ENCODE measurements at regions of chr12 and their contacts with region 1.

Region 1: DNA sequence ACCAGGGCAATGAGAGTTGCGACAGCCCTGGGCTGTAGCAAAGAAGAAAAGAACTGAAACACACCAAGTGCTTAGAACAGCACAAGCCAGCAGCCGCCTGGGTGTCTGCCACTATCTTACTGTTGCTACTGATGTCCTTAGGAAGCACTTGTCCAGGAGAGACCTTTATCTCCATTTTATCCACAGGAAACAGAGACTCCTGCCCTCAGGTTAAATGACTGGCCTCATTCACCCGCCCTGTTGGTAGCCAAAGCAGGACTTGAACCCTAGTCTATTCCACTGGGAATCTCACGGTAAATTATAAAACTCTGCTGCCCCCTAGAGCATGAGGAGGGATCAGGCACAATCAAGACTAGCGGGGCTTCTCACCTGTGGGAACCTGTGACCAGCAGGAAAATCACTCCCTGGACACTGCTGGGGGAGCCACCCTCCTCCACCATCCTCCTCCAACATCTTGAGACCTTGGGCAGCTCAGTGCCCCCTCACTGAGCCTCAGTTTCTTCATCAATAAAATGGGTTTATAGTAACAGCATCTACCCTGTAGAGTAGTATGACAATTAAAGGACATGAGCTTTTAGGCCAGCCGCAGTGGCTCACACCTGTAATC is 20.5 kb upstream of the TESC start:
- DNase-seq: peak; percentile 66

Region 2: DNA sequence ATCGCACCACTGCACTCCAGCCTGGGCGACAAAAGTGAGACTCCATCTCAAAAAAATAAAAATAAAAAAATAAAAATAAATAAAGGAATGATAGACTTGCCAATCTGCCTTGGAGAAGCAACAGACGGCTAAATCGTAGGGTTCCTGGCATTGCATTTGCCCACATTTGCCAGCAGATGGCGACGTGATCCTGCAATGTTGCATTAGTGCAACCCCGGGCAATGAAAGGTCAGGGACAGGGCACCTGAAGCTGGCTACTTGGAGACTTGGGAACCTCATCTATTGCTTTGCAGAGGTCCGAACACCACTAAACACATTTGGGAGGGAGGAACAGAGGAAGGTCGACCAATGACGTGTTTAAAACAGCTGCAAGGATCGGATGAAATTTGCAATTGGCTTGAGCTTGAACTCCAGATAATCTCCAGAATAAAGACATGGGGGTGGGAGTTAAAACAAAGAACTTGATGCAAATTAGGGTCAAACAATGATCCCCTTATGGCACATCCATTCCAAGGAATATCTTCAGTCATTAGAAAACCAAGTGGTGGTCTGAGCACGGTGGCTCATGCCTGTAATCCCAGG is 416.4 kb before region 1 on chr12:
- in situ Hi-C with region 1: loop called (anchors 25 kb)
- DNase-seq: peak; percentile 66

Region 3: DNA sequence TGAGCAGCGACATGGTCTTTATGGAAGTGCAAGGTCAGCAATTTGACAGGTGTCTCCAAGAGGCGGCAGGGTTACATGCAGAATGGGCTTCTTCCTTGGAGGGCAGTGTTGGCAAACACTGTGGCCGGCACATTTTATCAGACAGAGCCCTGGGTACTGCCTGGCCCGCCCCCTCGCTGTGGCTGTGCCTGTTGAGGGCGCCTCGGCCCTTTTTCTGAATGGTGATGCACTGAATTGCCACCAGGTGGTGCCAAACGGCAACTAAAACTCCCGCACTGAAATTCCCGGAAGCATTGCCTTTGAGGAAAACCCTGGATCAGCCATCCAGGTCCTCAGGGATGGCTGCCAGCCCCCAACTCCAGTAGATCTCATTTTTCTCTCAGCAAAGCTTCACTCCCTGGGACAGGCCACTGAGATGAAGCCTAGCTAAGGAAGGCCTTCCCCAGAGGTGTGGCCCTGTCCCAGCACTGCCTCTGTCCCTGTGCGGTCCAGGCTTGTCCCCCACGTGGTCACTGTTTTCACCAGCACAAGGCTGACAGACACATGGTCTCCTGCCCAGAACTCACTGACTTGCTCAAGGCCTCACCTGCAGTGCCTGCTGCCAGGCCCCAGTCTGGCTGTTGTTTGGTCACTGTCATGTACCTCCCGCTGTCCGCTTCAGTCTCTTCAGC is 94.1 kb before region 1 on chr12:
- in situ Hi-C with region 1: loop called (anchors 10 kb)
- DNase-seq: peak; percentile 81

Measured in KBM-7 (cell line).